Activated B cell treated with CpG ODN at 0.5 μM for 24 hours (primary cell): ENCODE measurements at regions of chr11 and their contacts with region 1.

Region 1: GRCh38 chr11:34366522-34366921 is 8.7 kb upstream of the ABTB2 start:
- DNase-seq: no peak
- ATAC-seq: no peak
- H3K4me3 Mint-ChIP-seq: no peak overlapping the region
- H3K27ac Mint-ChIP-seq: no peak overlapping the region
- H3K4me1 Mint-ChIP-seq: peaks cover under 1% of the 10 kb centered on the region
- H3K27me3 Mint-ChIP-seq: peaks cover 20% of the 10 kb centered on the region
- CTCF ChIP-seq: no peak

Region 2: DNA sequence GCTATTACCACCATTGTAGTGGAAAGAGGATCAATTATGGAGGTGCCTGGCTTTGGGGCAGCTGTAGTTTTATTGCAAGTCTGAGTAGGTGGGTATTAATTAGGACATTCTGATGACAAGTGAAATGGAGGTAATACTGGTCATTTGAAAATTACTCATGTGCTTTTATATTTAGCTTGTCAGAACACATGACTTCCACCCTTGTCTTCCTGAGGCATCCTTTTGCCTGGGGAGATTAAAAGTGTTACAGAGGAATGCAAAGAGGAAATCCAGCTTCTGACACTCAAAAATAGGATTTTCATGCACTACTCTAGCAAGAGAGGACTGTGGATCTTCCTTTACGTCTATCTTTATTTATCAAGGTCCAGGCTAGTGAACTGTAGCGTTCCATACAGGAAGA is 359.6 kb before region 1 on chr11:
- CTCF ChIA-PET with region 1: no interaction called
- POLR2A ChIA-PET with region 1: interaction called, 13 read pairs
- intact Hi-C with region 1: no loop called
- DNase-seq: no peak
- ATAC-seq: no peak
- H3K4me3 Mint-ChIP-seq: no peak overlapping the region
- H3K27ac Mint-ChIP-seq: no peak overlapping the region
- H3K4me1 Mint-ChIP-seq: no peaks in the 10 kb centered on the region
- H3K27me3 Mint-ChIP-seq: peaks cover 10% of the 10 kb centered on the region
- CTCF ChIP-seq: no peak

Region 3: GRCh38 chr11:34468209-34468841 is 101.8 kb after region 1 on chr11:
- CTCF ChIA-PET with region 1: interaction called, 10 read pairs
- POLR2A ChIA-PET with region 1: no interaction called
- intact Hi-C with region 1: loop called (anchors 1 kb)
- DNase-seq: no peak
- ATAC-seq: peak; percentile 66
- H3K4me3 Mint-ChIP-seq: no peak overlapping the region
- H3K27ac Mint-ChIP-seq: no peak overlapping the region
- H3K4me1 Mint-ChIP-seq: no peaks in the 10 kb centered on the region
- H3K27me3 Mint-ChIP-seq: no peaks in the 10 kb centered on the region
- CTCF ChIP-seq: no peak

Region 4: GRCh38 chr11:34492806-34493414 is 126.4 kb after region 1 on chr11:
- CTCF ChIA-PET with region 1: interaction called, 5 read pairs
- POLR2A ChIA-PET with region 1: no interaction called
- intact Hi-C with region 1: loop called (anchors 10 kb)
- DNase-seq: no peak
- ATAC-seq: no peak
- H3K4me3 Mint-ChIP-seq: no peak overlapping the region
- H3K27ac Mint-ChIP-seq: no peak overlapping the region
- H3K4me1 Mint-ChIP-seq: no peaks in the 10 kb centered on the region
- H3K27me3 Mint-ChIP-seq: peaks cover 5% of the 10 kb centered on the region
- CTCF ChIP-seq: peak; percentile 65

Region 5: DNA sequence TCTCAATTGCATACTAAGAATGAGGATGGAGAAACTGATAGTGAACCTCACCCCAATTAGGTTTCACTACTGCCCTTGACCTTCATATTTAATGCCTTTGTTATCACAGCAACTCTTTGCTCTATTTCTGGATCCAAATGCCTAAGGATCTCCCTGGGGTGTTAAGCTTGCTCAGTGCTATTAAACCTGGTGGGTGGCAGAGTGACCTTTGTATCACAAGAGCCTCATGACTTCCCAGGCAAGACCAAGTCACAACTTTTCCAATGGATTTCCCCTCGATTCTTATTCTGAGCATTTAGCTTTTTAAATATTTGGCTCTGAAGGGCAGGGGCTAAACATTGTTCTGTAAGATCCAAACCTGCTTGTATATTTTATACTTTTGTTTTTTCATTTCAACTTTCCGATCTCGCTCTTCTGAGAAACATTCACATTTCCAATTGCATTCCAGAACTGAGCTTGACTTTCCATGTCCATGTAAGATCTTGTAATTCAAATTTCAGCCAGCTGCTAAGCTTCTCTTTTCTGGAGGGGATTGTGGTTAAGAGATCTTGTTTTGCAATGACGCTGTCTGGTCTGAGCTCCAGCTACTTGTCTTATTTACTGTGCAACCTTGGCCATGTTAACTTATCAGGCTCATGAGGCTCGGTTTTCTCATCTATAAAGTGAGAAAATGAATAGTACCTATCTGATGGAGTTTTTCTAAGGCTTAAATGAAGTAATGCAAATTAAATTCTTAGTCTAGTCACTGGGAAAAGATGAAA is 248.0 kb after region 1 on chr11:
- CTCF ChIA-PET with region 1: no interaction called
- POLR2A ChIA-PET with region 1: no interaction called
- intact Hi-C with region 1: no loop called
- DNase-seq: no peak
- ATAC-seq: peak; percentile 53
- H3K4me3 Mint-ChIP-seq: peak overlapping the region; percentile 0
- H3K27ac Mint-ChIP-seq: peak overlapping the region; percentile 86
- H3K4me1 Mint-ChIP-seq: peaks cover 30% of the 10 kb centered on the region
- H3K27me3 Mint-ChIP-seq: no peaks in the 10 kb centered on the region
- CTCF ChIP-seq: no peak